Naive thymus-derived CD8-positive, alpha-beta T cell (primary cell): ENCODE measurements at regions of chr12 and their contacts with region 1.

Region 1: GRCh38 chr12:56104109-56104814 is at the start of gene PA2G4:
- DNase-seq: peak; percentile 82 to 99 (median 94)
- ATAC-seq: peak; percentile 88
- H3K4me3 Mint-ChIP-seq: peak within 1 kb of the TSS; percentile 93 to 100 (median 98)
- H3K27ac Mint-ChIP-seq: peak within 1 kb of the TSS; percentile 97 to 99 (median 98)
- H3K4me1 Mint-ChIP-seq: peaks cover 35 to 73% (median 62%) of the 10 kb centered on the region in 4 donors
- H3K27me3 Mint-ChIP-seq: no peaks in the 10 kb centered on the region
- polyA plus RNA-seq, gene PA2G4: 219 to 241 (median 241) TPM

Region 2: DNA sequence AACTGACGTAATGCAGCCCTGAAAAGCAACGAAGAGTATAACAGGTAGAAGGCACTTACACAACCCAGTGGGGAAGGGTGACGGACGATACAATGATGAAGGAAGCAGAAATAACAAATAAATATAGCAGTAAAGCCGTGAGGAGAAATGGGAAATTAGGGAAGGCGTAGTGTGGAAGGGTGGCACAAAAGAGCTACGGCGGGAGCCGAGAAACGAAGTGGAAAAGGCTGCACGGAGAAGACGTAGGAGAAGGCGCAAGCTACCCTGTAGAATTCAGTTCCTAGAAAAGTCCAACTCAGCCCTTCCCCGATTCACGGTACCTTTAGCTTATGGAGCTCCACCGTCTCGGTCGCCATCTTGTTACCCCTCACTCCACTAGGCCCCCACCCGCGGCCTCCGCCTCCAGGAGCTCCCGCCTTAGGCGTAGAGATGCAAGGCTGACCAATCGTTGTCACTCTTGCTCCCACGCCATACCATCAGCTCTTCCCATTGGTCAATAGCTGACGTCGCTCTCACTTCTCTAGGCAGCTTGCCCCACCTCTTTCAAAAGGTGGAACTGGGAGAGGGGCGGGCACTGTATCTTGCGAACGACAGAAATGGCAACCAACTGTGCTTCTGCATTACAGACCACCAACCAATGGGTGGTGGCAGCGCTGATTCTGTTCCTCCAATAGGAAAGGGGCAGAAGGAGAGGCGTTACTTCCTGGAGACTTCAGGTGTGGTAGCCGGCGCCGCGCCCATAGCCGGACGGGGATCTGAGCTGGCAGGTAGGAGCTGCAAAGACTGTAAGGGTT is 286.7 kb before region 1 on chr12 and contains the starts of genes ORMDL2 and SARNP:
- POLR2A ChIA-PET with region 1: interaction called, 14 read pairs
- DNase-seq: peak; percentile 85 to 99 (median 98)
- ATAC-seq: peak; percentile 92 to 93
- H3K4me3 Mint-ChIP-seq: peak within 1 kb of the TSS in 1 of 10 donors; percentile 77
- H3K27ac Mint-ChIP-seq: no peak within 1 kb of the TSS
- H3K4me1 Mint-ChIP-seq: peaks cover 10 to 51% (median 41%) of the 10 kb centered on the region in 4 donors
- H3K27me3 Mint-ChIP-seq: no peaks in the 10 kb centered on the region
- polyA plus RNA-seq, gene ORMDL2: 71.6 to 92.5 (median 90.3) TPM
- polyA plus RNA-seq, gene SARNP: 93.6 to 104 (median 94.0) TPM

Region 3: GRCh38 chr12:55973598-55974307 is 130.5 kb before region 1 on chr12 and contains the start of gene RAB5B:
- POLR2A ChIA-PET with region 1: interaction called, 19 read pairs
- DNase-seq: peak; percentile 89 to 100 (median 98)
- ATAC-seq: peak; percentile 90
- H3K4me3 Mint-ChIP-seq: no peak within 1 kb of the TSS
- H3K27ac Mint-ChIP-seq: no peak within 1 kb of the TSS
- H3K4me1 Mint-ChIP-seq: peaks cover 10 to 28% (median 24%) of the 10 kb centered on the region in 4 donors
- H3K27me3 Mint-ChIP-seq: no peaks in the 10 kb centered on the region
- polyA plus RNA-seq, gene RAB5B: 61.6 to 69.4 (median 65.9) TPM

Region 4: GRCh38 chr12:56078990-56079664 is 25.1 kb before region 1 on chr12:
- POLR2A ChIA-PET with region 1: interaction called, 100 read pairs
- DNase-seq: peak; percentile 30 to 74 (median 50)
- ATAC-seq: peak; percentile 73 to 76
- H3K4me3 Mint-ChIP-seq: peak overlapping the region; percentile 81 to 91 (median 86)
- H3K27ac Mint-ChIP-seq: peak overlapping the region in 6 of 10 donors; percentile 2 to 64 (median 36)
- H3K4me1 Mint-ChIP-seq: peaks cover 0 to 14% (median 9%) of the 10 kb centered on the region in 4 donors
- H3K27me3 Mint-ChIP-seq: peaks cover 0 to 6% (median 0%) of the 10 kb centered on the region in 5 donors

Region 5: DNA sequence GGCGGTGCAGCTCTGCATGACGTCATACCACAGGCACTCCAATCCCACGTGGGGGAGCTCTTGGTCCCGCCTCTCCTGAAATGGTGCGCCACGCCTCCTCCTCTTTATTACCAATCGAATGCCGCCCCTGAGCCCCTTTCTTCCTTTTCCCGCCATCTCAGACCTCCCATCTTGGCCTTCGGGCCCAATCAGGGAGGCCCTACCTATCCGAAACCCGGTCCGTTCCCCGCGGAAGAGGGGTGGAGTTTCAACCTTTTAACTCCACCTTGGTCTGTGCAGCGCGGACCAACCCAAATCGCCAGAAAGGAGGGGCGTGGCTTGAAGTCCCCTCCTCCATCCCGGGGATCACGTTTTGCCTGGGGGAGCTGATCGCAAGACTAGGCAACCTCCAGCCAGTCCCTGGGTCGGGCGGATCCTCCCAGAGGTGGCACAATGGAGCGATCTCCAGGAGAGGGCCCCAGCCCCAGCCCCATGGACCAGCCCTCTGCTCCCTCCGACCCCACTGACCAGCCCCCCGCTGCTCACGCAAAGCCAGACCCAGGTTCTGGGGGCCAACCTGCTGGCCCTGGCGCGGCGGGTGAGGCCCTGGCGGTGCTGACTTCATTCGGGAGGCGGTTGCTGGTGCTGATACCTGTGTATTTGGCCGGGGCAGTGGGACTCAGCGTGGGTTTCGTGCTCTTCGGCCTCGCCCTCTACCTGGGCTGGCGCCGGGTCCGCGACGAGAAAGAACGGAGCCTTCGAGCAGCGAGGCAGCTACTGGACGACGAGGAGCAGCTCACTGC is 23.8 kb after region 1 on chr12 and contains the start of gene ESYT1:
- POLR2A ChIA-PET with region 1: interaction called, 46 read pairs
- DNase-seq: peak; percentile 86 to 100 (median 98)
- ATAC-seq: peak; percentile 83 to 90
- H3K4me3 Mint-ChIP-seq: peak within 1 kb of the TSS; percentile 97 to 100 (median 99)
- H3K27ac Mint-ChIP-seq: peak within 1 kb of the TSS; percentile 90 to 99 (median 96)
- H3K4me1 Mint-ChIP-seq: peaks cover 32 to 78% (median 60%) of the 10 kb centered on the region in 4 donors
- H3K27me3 Mint-ChIP-seq: no peaks in the 10 kb centered on the region
- polyA plus RNA-seq, gene ESYT1: 354 to 433 (median 357) TPM

Region 6: DNA sequence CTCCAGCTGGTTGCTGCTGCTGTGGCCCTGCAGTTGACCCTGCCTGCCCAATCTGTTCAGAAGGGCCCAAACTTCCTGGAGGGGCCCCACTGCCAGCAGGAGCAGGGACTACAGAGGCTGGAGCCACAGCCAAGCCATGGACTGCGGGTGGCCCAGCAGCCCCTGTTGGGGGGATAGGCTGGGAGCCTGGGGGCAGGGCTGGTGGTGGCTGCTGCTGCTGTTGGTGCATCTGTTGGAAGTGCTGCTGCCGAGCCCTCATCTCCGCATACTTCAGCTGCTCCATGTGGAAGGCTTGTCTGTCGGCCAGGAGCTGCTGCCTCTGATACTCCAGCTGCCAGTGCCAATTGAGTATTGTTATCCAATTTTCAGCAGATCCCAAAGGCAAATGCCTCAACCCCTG is 61.1 kb after region 1 on chr12:
- POLR2A ChIA-PET with region 1: no interaction called
- DNase-seq: no peak
- ATAC-seq: no peak
- H3K4me3 Mint-ChIP-seq: no peak overlapping the region
- H3K27ac Mint-ChIP-seq: peak overlapping the region in 3 of 10 donors; percentile 1 to 55 (median 22)
- H3K4me1 Mint-ChIP-seq: peaks cover 12 to 19% (median 18%) of the 10 kb centered on the region in 4 donors
- H3K27me3 Mint-ChIP-seq: no peaks in the 10 kb centered on the region

Region 7: DNA sequence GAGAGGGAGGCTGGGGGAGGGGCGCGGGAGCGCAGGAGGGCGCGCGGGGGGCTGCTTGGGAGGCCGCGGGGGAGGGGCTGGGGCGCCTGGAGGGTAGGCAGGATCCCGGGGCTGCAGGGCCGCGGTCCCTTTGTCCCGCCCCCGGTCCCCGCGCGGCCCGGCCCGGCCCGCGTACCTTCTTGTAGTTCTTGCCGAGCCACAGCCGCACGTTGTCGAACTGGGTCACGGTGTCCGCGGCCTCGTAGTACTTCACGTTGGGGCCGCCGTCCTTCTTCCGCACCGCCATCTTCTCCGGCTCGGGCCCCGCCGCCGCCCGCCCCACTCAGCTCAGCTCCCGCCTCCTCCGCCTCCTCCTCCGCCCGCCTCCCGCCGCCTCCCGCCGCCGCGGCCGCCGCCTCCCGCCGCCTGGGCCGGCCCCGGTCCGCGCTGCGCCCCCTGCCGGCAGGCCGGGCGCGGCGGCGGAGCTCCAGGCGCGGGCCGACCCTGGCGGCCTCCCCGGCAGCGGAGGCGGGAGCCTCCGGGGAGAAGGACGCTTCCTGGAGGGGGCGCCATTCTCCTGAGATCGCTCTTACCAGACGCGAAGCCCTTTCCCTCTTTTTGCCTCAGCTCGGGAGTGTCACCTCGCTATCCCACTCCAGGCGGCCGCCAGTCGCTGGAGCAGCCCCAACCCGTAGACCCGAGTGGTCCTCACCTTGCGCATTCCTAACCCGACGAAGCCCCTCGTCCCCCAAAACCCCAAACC is 85.1 kb after region 1 on chr12 and contains the start of gene SMARCC2:
- POLR2A ChIA-PET with region 1: interaction called, 25 read pairs
- DNase-seq: peak; percentile 74 to 91 (median 82)
- ATAC-seq: peak; percentile 82 to 84
- H3K4me3 Mint-ChIP-seq: peak within 1 kb of the TSS; percentile 89 to 99 (median 96)
- H3K27ac Mint-ChIP-seq: peak within 1 kb of the TSS; percentile 97 to 100 (median 98)
- H3K4me1 Mint-ChIP-seq: peaks cover 39 to 51% (median 43%) of the 10 kb centered on the region in 4 donors
- H3K27me3 Mint-ChIP-seq: peaks cover 0 to 3% (median 0%) of the 10 kb centered on the region in 5 donors
- polyA plus RNA-seq, gene SMARCC2: 46.3 to 70.4 (median 54.1) TPM

Region 8: GRCh38 chr12:56315622-56316473 is 211.6 kb after region 1 on chr12 and contains the start of gene CNPY2:
- POLR2A ChIA-PET with region 1: interaction called, 10 read pairs
- DNase-seq: peak; percentile 86 to 98 (median 93)
- ATAC-seq: peak; percentile 92
- H3K4me3 Mint-ChIP-seq: peak within 1 kb of the TSS; percentile 95 to 100 (median 98)
- H3K27ac Mint-ChIP-seq: peak within 1 kb of the TSS; percentile 96 to 100 (median 98)
- H3K4me1 Mint-ChIP-seq: peaks cover 5 to 18% (median 17%) of the 10 kb centered on the region in 4 donors
- H3K27me3 Mint-ChIP-seq: no peaks in the 10 kb centered on the region
- polyA plus RNA-seq, gene CNPY2: 173 to 196 (median 179) TPM